Ovary (tissue), 10 donors: ENCODE measurements at regions of chr2 and their contacts with region 1.

Region 1: GRCh38 chr2:39033980-39034379 is 86.9 kb downstream of the SOS1 start:
- DNase-seq: no peak
- H3K4me3 ChIP-seq: no peak overlapping the region
- H3K27ac ChIP-seq: no peak overlapping the region
- H3K4me1 ChIP-seq: no peaks in the 10 kb centered on the region
- H3K27me3 ChIP-seq: no peaks in the 10 kb centered on the region
- CTCF ChIP-seq: no peak
- EP300 ChIP-seq: no peak
- POLR2A ChIP-seq: no peak

Region 2: GRCh38 chr2:37832590-37833197 is 1201.3 kb before region 1 on chr2:
- intact Hi-C with region 1: no loop called
- DNase-seq: peak; percentile 83 to 92 (median 89)
- H3K4me3 ChIP-seq: no peak overlapping the region
- H3K27ac ChIP-seq: no peak overlapping the region
- H3K4me1 ChIP-seq: peaks cover 11% of the 10 kb centered on the region
- H3K27me3 ChIP-seq: no peaks in the 10 kb centered on the region
- CTCF ChIP-seq: peak; percentile 45 to 85 (median 78)
- EP300 ChIP-seq: no peak
- POLR2A ChIP-seq: peak; percentile 24

Region 3: GRCh38 chr2:38959938-38960608 is 73.9 kb before region 1 on chr2:
- intact Hi-C with region 1: loop called in 1 of 4 experiments (anchors 10 kb)
- DNase-seq: peak; percentile 86 to 91 (median 87)
- H3K4me3 ChIP-seq: peak overlapping the region; percentile 51
- H3K27ac ChIP-seq: peak overlapping the region in 1 of 2 donors; percentile 58
- H3K4me1 ChIP-seq: peaks cover 10% of the 10 kb centered on the region
- H3K27me3 ChIP-seq: no peaks in the 10 kb centered on the region
- CTCF ChIP-seq: peak in 2 of 3 donors; percentile 33 to 50
- EP300 ChIP-seq: no peak
- POLR2A ChIP-seq: no peak

Region 4: GRCh38 chr2:39099870-39100728 is 66.1 kb after region 1 on chr2:
- intact Hi-C with region 1: no loop called
- DNase-seq: no peak
- H3K4me3 ChIP-seq: no peak overlapping the region
- H3K27ac ChIP-seq: no peak overlapping the region
- H3K4me1 ChIP-seq: no peaks in the 10 kb centered on the region
- H3K27me3 ChIP-seq: no peaks in the 10 kb centered on the region
- CTCF ChIP-seq: no peak
- EP300 ChIP-seq: no peak
- POLR2A ChIP-seq: no peak